Naive thymus-derived CD4-positive, alpha-beta T cell (primary cell): ENCODE measurements at regions of chr6 and their contacts with region 1.

Region 1: GRCh38 chr6:13328076-13328874 is at the start of gene TBC1D7:
- DNase-seq: peak; percentile 89 to 97 (median 93)
- ATAC-seq: peak; percentile 92
- H3K4me3 ChIP-seq: peak within 1 kb of the TSS; percentile 99
- H3K4me3 Mint-ChIP-seq: peak within 1 kb of the TSS; percentile 83 to 96 (median 91)
- H3K27ac ChIP-seq: peak within 1 kb of the TSS; percentile 97
- H3K27ac Mint-ChIP-seq: peak within 1 kb of the TSS; percentile 94 to 99 (median 97)
- H3K4me1 ChIP-seq: peaks cover 5 to 15% of the 10 kb centered on the region in 2 donors
- H3K4me1 Mint-ChIP-seq: peaks cover 5 to 34% (median 31%) of the 10 kb centered on the region in 7 donors
- H3K27me3 ChIP-seq: no peaks in the 10 kb centered on the region
- H3K27me3 Mint-ChIP-seq: no peaks in the 10 kb centered on the region
- total RNA-seq, gene TBC1D7: 14.8 to 34.6 (median 17.0) TPM

Region 2: GRCh38 chr6:12060780-12061619 is 1267.3 kb before region 1 on chr6:
- CTCF ChIA-PET with region 1: no interaction called
- POLR2A ChIA-PET with region 1: no interaction called
- intact Hi-C with region 1: loop called in 1 of 2 experiments (anchors 5 kb)
- DNase-seq: peak; percentile 44 to 90 (median 76)
- ATAC-seq: peak; percentile 97
- H3K4me3 ChIP-seq: peak overlapping the region; percentile 24
- H3K4me3 Mint-ChIP-seq: peak overlapping the region; percentile 77 to 94 (median 84)
- H3K27ac ChIP-seq: peak overlapping the region; percentile 5
- H3K27ac Mint-ChIP-seq: peak overlapping the region in 8 of 9 donors; percentile 75 to 95 (median 88)
- H3K4me1 ChIP-seq: peaks cover 6 to 10% of the 10 kb centered on the region in 2 donors
- H3K4me1 Mint-ChIP-seq: peaks cover 42 to 78% (median 71%) of the 10 kb centered on the region in 7 donors
- H3K27me3 ChIP-seq: no peaks in the 10 kb centered on the region
- H3K27me3 Mint-ChIP-seq: no peaks in the 10 kb centered on the region

Region 3: GRCh38 chr6:13248053-13248452 is 80.2 kb before region 1 on chr6:
- CTCF ChIA-PET with region 1: no interaction called
- POLR2A ChIA-PET with region 1: no interaction called
- intact Hi-C with region 1: no loop called
- DNase-seq: no peak
- ATAC-seq: no peak
- H3K4me3 ChIP-seq: no peak overlapping the region
- H3K4me3 Mint-ChIP-seq: no peak overlapping the region
- H3K27ac ChIP-seq: no peak overlapping the region
- H3K27ac Mint-ChIP-seq: no peak overlapping the region
- H3K4me1 ChIP-seq: no peaks in the 10 kb centered on the region
- H3K4me1 Mint-ChIP-seq: peaks cover 0 to 1% (median 0%) of the 10 kb centered on the region in 7 donors
- H3K27me3 ChIP-seq: no peaks in the 10 kb centered on the region
- H3K27me3 Mint-ChIP-seq: peaks cover 0 to 10% (median 9%) of the 10 kb centered on the region in 5 donors

Region 4: GRCh38 chr6:13272131-13273046 is 55.9 kb before region 1 on chr6:
- CTCF ChIA-PET with region 1: no interaction called
- POLR2A ChIA-PET with region 1: no interaction called
- intact Hi-C with region 1: loop called in 1 of 2 experiments (anchors 2 kb)
- DNase-seq: peak in 1 of 9 donors; percentile 16
- ATAC-seq: peak; percentile 73
- H3K4me3 ChIP-seq: no peak overlapping the region
- H3K4me3 Mint-ChIP-seq: peak overlapping the region in 3 of 10 donors; percentile 76 to 79 (median 79)
- H3K27ac ChIP-seq: no peak overlapping the region
- H3K27ac Mint-ChIP-seq: peak overlapping the region in 2 of 9 donors; percentile 19 to 48
- H3K4me1 ChIP-seq: peaks cover 12 to 16% of the 10 kb centered on the region in 2 donors
- H3K4me1 Mint-ChIP-seq: peaks cover 12 to 37% (median 25%) of the 10 kb centered on the region in 7 donors
- H3K27me3 ChIP-seq: no peaks in the 10 kb centered on the region
- H3K27me3 Mint-ChIP-seq: peaks cover 0 to 9% (median 0%) of the 10 kb centered on the region in 5 donors

Region 5: GRCh38 chr6:13487122-13488014 is 159.1 kb after region 1 on chr6 and contains the start of gene GFOD1:
- CTCF ChIA-PET with region 1: no interaction called
- POLR2A ChIA-PET with region 1: interaction called, 4 read pairs
- intact Hi-C with region 1: loop called (anchors 1 to 2 kb)
- DNase-seq: peak; percentile 33 to 87 (median 54)
- ATAC-seq: peak; percentile 90
- H3K4me3 ChIP-seq: peak within 1 kb of the TSS; percentile 80
- H3K4me3 Mint-ChIP-seq: peak within 1 kb of the TSS; percentile 78 to 96 (median 92)
- H3K27ac ChIP-seq: peak within 1 kb of the TSS; percentile 23
- H3K27ac Mint-ChIP-seq: peak within 1 kb of the TSS in 7 of 9 donors; percentile 35 to 76 (median 65)
- H3K4me1 ChIP-seq: peaks cover 4 to 9% of the 10 kb centered on the region in 2 donors
- H3K4me1 Mint-ChIP-seq: peaks cover 23 to 40% (median 30%) of the 10 kb centered on the region in 7 donors
- H3K27me3 ChIP-seq: no peaks in the 10 kb centered on the region
- H3K27me3 Mint-ChIP-seq: peaks cover 0 to 14% (median 12%) of the 10 kb centered on the region in 5 donors
- total RNA-seq, gene GFOD1: 0.73 to 10.8 (median 2.0) TPM

Region 6: DNA sequence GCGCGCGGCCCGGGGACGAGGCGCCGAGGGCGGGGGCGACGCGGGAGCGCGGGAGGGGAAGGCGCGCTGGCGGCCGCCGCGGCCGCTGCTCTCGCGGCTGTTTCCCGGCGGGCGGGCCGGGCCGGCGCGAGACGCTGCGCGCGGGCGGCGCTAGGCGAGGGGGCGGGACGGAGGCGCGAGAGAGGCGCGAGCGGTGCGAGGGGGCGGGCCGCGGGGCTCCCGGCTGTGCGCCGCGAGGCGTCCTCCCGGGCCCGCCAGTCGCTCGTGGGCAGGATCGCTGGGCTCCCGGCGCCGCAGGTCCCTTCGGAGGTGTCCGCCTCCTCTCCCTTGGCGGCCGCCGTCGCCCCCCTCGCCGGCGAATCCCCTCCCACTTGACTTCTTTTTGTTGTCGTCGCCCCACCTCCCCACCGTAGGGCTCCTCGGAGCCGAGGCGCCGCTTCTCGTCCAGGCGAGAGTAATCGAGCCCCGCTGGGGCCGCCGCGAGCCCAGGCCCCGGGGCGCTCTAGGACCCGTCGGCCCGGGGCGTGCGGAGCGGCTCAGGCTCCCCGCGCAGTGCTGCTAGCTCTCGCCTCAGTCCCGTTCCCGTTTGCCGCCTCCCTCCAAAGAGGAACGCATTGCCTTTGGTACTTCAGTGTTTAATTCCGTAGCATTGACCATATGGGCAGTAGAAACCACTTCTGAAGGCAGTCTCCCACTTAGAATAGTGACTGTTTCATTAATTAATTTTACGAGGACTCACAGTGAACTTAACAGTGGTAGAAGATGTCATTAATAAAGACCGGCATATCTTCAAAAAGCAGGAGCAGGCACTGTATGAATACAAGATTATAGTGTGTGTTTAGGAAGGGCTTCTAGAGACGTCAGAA is 383.7 kb after region 1 on chr6 and contains the start of gene RANBP9:
- CTCF ChIA-PET with region 1: no interaction called
- POLR2A ChIA-PET with region 1: no interaction called
- intact Hi-C with region 1: loop called (anchors 1 to 2 kb)
- DNase-seq: peak; percentile 86 to 92 (median 90)
- ATAC-seq: peak; percentile 90
- H3K4me3 ChIP-seq: peak within 1 kb of the TSS; percentile 85
- H3K4me3 Mint-ChIP-seq: peak within 1 kb of the TSS; percentile 91 to 100 (median 98)
- H3K27ac ChIP-seq: peak within 1 kb of the TSS; percentile 94
- H3K27ac Mint-ChIP-seq: peak within 1 kb of the TSS; percentile 93 to 99 (median 98)
- H3K4me1 ChIP-seq: peaks cover 12 to 15% of the 10 kb centered on the region in 2 donors
- H3K4me1 Mint-ChIP-seq: peaks cover 31 to 58% (median 45%) of the 10 kb centered on the region in 7 donors
- H3K27me3 ChIP-seq: no peaks in the 10 kb centered on the region
- H3K27me3 Mint-ChIP-seq: no peaks in the 10 kb centered on the region
- total RNA-seq, gene RANBP9: 45.4 to 56.9 (median 49.2) TPM